OCI-LY7 (cell line): ENCODE measurements at regions of chr9 and their contacts with region 1.

Region 1: GRCh38 chr9:112844771-112845542 is 45.7 kb downstream of the SLC46A2 start:
- DNase-seq: peak; percentile 63
- H3K4me3 ChIP-seq: no peak overlapping the region
- H3K27ac ChIP-seq: no peak overlapping the region
- H3K4me1 ChIP-seq: peaks cover 5% of the 10 kb centered on the region
- CTCF ChIP-seq: peak; percentile 100

Region 2: DNA sequence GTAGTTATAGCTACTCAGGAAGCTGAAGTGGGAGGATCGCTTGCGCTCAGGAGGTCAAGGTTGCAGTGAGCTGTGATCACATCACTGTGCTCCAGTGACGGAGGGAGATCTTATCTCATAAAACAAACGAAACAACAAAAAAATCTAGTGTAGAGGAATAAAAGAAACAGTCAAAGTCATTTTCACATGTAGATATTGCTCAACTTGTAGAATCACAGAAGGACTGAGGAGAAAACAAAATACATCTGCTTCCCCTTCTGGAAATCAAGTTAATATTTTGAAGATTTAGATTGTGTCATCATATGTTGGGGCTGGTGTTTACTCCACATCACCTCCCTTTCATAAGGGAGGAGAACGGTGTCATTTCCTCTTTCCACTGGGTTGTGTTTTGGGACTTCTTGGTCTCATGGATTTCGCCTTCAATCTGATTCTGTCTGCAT is 53.9 kb after region 1 on chr9:
- CTCF ChIA-PET with region 1: interaction called, 7 read pairs
- POLR2A ChIA-PET with region 1: no interaction called
- intact Hi-C with region 1: loop called (anchors 1 kb)
- DNase-seq: no peak
- H3K4me3 ChIP-seq: no peak overlapping the region
- H3K27ac ChIP-seq: no peak overlapping the region
- H3K4me1 ChIP-seq: peaks cover 6% of the 10 kb centered on the region
- CTCF ChIP-seq: no peak

Region 3: DNA sequence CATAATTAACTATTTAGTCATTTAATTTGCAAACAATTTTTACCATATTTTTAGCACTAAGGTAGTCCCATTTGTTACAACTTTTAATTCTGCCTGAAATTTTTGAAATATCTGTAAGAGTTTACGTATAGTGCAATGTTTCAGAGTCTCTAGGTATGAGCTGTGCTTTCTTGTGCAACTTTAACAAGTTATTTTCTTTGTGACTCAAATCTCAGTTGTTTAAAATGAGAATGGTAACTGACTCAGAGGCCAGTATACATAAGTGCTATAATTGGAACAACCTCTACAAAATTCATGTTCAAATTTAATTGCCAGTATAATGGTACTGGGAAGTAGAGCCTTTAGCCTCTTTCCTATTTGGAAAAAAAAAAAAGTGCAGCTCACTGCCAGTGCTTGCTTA is 181.2 kb after region 1 on chr9:
- CTCF ChIA-PET with region 1: no interaction called
- POLR2A ChIA-PET with region 1: no interaction called
- intact Hi-C with region 1: no loop called
- DNase-seq: no peak
- H3K4me3 ChIP-seq: no peak overlapping the region
- H3K27ac ChIP-seq: no peak overlapping the region
- H3K4me1 ChIP-seq: no peaks in the 10 kb centered on the region
- CTCF ChIP-seq: no peak